B cell (primary cell): ENCODE measurements at regions of chr16 and their contacts with region 1.

Region 1: GRCh38 chr16:68719993-68720489 is 17.1 kb upstream of the CDH1 start:
- DNase-seq: no peak
- ATAC-seq: peak; percentile 83
- H3K4me3 ChIP-seq: no peak overlapping the region
- H3K4me3 Mint-ChIP-seq: no peak overlapping the region
- H3K27ac ChIP-seq: no peak overlapping the region
- H3K27ac Mint-ChIP-seq: peak overlapping the region; percentile 68
- H3K4me1 ChIP-seq: peaks cover 0 to 2% of the 10 kb centered on the region in 2 donors
- H3K4me1 Mint-ChIP-seq: peaks cover 10% of the 10 kb centered on the region
- H3K27me3 ChIP-seq: no peaks in the 10 kb centered on the region
- H3K27me3 Mint-ChIP-seq: no peaks in the 10 kb centered on the region
- CTCF ChIP-seq: no peak

Region 2: GRCh38 chr16:68696514-68696913 is 23.5 kb before region 1 on chr16:
- CTCF ChIA-PET with region 1: no interaction called
- POLR2A ChIA-PET with region 1: no interaction called
- intact Hi-C with region 1: no loop called
- DNase-seq: no peak
- ATAC-seq: no peak
- H3K4me3 ChIP-seq: no peak overlapping the region
- H3K4me3 Mint-ChIP-seq: no peak overlapping the region
- H3K27ac ChIP-seq: no peak overlapping the region
- H3K27ac Mint-ChIP-seq: no peak overlapping the region
- H3K4me1 ChIP-seq: no peaks in the 10 kb centered on the region
- H3K4me1 Mint-ChIP-seq: no peaks in the 10 kb centered on the region
- H3K27me3 ChIP-seq: no peaks in the 10 kb centered on the region
- H3K27me3 Mint-ChIP-seq: peaks cover 10% of the 10 kb centered on the region
- CTCF ChIP-seq: no peak

Region 3: GRCh38 chr16:68756250-68756915 is 36.3 kb after region 1 on chr16:
- CTCF ChIA-PET with region 1: interaction called, 3 read pairs
- POLR2A ChIA-PET with region 1: no interaction called
- intact Hi-C with region 1: loop called (anchors 5 kb)
- DNase-seq: peak; percentile 43
- ATAC-seq: peak; percentile 80
- H3K4me3 ChIP-seq: no peak overlapping the region
- H3K4me3 Mint-ChIP-seq: peak overlapping the region; percentile 69
- H3K27ac ChIP-seq: peak overlapping the region; percentile 50 to 69
- H3K27ac Mint-ChIP-seq: peak overlapping the region; percentile 99
- H3K4me1 ChIP-seq: peaks cover 5 to 22% of the 10 kb centered on the region in 2 donors
- H3K4me1 Mint-ChIP-seq: peaks cover 37% of the 10 kb centered on the region
- H3K27me3 ChIP-seq: peaks cover 0 to 4% (median 1%) of the 10 kb centered on the region in 4 experiments
- H3K27me3 Mint-ChIP-seq: peaks cover 2% of the 10 kb centered on the region
- CTCF ChIP-seq: no peak

Region 4: DNA sequence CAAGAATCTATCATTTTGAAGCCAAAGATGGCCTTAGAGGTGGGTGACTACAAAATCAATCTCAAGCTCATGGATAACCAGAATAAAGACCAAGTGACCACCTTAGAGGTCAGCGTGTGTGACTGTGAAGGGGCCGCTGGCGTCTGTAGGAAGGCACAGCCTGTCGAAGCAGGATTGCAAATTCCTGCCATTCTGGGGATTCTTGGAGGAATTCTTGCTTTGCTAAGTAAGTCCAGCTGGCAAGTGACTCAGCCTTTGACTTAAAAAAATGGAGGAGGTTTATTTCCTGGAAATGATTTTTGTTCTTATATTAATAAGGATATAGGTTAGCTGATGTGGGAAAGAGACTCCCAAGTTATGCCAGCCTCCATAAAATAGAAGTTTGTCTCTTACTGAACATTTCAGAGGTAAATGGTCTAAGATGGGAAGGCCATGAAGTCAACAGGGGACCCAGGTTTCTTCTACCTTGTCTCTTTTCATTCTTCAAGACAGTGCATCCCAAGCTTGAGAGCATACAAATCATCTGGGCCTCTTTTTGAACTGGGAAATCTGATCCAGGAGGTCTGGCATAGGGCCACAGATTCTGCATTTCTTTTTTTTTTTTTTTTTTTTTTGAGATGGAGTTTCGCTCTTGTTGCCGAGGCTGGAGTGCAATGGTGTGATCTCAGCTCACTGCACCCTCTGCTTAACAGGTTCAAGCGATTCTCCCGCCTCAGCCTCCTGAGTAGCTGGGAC is 103.5 kb after region 1 on chr16:
- CTCF ChIA-PET with region 1: no interaction called
- POLR2A ChIA-PET with region 1: no interaction called
- intact Hi-C with region 1: no loop called
- DNase-seq: no peak
- ATAC-seq: no peak
- H3K4me3 ChIP-seq: no peak overlapping the region
- H3K4me3 Mint-ChIP-seq: no peak overlapping the region
- H3K27ac ChIP-seq: no peak overlapping the region
- H3K27ac Mint-ChIP-seq: no peak overlapping the region
- H3K4me1 ChIP-seq: no peaks in the 10 kb centered on the region
- H3K4me1 Mint-ChIP-seq: no peaks in the 10 kb centered on the region
- H3K27me3 ChIP-seq: peaks cover 0 to 4% (median 0%) of the 10 kb centered on the region in 4 experiments
- H3K27me3 Mint-ChIP-seq: peaks cover under 1% of the 10 kb centered on the region
- CTCF ChIP-seq: no peak